ENCODE measurements at regions of chr12 and their contacts with region 1.

Region 1: GRCh38 chr12:97308576-97309198 is 153.9 kb upstream of the RMST start:
- DNase-seq: peak; percentile 77
- ATAC-seq: peak; percentile 69
- H3K4me3 ChIP-seq: no peak overlapping the region
- H3K4me3 Mint-ChIP-seq: no peak overlapping the region
- H3K27ac ChIP-seq: no peak overlapping the region
- H3K27ac Mint-ChIP-seq: no peak overlapping the region
- H3K4me1 ChIP-seq: peaks cover 16 to 18% of the 10 kb centered on the region in 2 donors
- H3K4me1 Mint-ChIP-seq: peaks cover 26% of the 10 kb centered on the region
- H3K27me3 ChIP-seq: peaks cover 0 to 5% (median under 1%) of the 10 kb centered on the region in 4 experiments
- H3K27me3 Mint-ChIP-seq: peaks cover 21% of the 10 kb centered on the region
- CTCF ChIP-seq: peak; percentile 88

Region 2: GRCh38 chr12:96578526-96579125 is 730.1 kb before region 1 on chr12:
- CTCF ChIA-PET with region 1: interaction called, 15 read pairs
- POLR2A ChIA-PET with region 1: interaction called, 5 read pairs
- intact Hi-C with region 1: loop called (anchors 1 kb)
- DNase-seq: peak; percentile 69
- ATAC-seq: peak; percentile 60
- H3K4me3 ChIP-seq: no peak overlapping the region
- H3K4me3 Mint-ChIP-seq: no peak overlapping the region
- H3K27ac ChIP-seq: no peak overlapping the region
- H3K27ac Mint-ChIP-seq: no peak overlapping the region
- H3K4me1 ChIP-seq: no peaks in the 10 kb centered on the region
- H3K4me1 Mint-ChIP-seq: peaks cover 2% of the 10 kb centered on the region
- H3K27me3 ChIP-seq: no peaks in the 10 kb centered on the region
- H3K27me3 Mint-ChIP-seq: no peaks in the 10 kb centered on the region
- CTCF ChIP-seq: peak; percentile 81

Region 3: DNA sequence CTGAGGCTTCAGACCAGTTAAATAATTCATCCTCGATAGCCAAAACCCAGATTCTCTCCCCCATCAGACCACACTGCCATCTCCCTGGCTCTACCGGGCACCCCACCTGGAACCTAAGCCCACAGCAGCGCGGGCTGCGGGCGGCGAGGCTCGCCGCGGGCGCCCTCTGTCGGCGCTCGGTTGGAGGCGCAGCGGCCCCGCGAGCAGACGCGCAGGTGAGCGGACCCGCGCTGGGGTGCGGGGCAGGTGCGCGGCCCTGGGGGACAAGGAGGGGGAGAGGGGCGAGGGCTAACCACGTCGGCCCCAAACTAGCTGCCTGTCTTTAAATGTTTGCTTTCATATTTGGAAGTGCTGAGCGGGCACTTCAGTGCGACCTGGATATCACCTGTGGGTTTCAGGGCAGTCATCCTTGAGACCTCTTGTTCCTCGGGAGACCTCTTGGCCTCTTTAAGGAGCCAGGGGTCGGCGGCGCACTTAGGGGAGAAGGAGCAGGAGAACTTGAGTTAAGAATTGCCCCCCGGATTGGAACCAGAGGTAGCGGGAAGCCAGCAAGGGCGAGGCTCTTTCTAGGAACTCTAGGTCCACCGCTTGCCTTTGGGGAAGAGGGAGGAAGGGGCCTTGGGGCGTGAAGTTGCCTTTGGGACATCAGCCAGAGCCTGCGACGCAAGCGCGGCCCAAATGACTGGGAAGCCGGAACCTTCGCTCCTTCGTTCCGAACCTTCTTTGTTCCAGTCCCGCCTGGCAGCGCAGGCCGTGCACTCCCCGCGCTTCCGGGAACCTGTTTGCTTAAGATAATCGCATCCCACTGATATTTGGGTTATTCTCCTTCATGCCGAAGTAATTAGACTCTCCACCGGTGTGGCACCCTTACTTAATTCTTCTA is 323.0 kb before region 1 on chr12:
- CTCF ChIA-PET with region 1: interaction called, 6 read pairs
- POLR2A ChIA-PET with region 1: interaction called, 4 read pairs
- intact Hi-C with region 1: loop called (anchors 5 kb)
- DNase-seq: peak; percentile 67
- ATAC-seq: peak; percentile 83
- H3K4me3 ChIP-seq: peak overlapping the region in 4 of 5 experiments; percentile 14 to 59 (median 42)
- H3K4me3 Mint-ChIP-seq: peak overlapping the region; percentile 66
- H3K27ac ChIP-seq: no peak overlapping the region
- H3K27ac Mint-ChIP-seq: no peak overlapping the region
- H3K4me1 ChIP-seq: peaks cover 10 to 12% of the 10 kb centered on the region in 2 donors
- H3K4me1 Mint-ChIP-seq: peaks cover 6% of the 10 kb centered on the region
- H3K27me3 ChIP-seq: peaks cover 0 to 20% (median 18%) of the 10 kb centered on the region in 4 experiments
- H3K27me3 Mint-ChIP-seq: peaks cover 40% of the 10 kb centered on the region
- CTCF ChIP-seq: peak; percentile 92

Region 4: DNA sequence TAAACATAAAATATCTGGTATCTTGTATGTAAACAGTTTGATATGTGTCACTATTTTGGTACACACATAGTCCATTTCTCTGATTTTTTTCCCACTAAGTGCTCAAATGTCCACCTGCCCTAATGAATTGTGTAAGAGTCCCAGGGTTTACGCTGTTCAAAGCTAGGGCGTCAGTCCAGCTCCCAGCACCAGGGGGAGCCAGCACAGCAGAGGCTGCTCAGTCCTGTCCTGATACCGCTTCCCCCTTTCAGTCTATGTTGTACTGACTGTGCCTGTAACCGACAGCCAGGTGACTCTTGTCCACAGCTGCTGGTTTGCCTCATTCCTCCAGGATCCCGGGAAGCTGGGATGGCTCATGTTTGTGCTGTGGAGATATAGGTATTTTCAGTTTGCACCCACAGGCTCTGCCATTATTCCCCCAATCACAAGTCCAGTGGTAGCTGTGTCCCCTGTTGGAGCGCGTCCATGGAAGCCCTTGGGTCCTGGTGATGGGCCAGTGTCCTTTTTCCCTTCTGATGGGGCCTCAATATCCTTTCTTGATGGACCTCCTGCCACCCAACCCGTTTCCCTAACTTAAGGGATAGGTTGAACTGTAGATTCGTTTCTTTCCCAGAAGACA is 159.6 kb before region 1 on chr12:
- CTCF ChIA-PET with region 1: interaction called, 126 read pairs
- POLR2A ChIA-PET with region 1: no interaction called
- intact Hi-C with region 1: loop called (anchors 1 kb)
- DNase-seq: peak; percentile 73
- ATAC-seq: peak; percentile 87
- H3K4me3 ChIP-seq: no peak overlapping the region
- H3K4me3 Mint-ChIP-seq: no peak overlapping the region
- H3K27ac ChIP-seq: no peak overlapping the region
- H3K27ac Mint-ChIP-seq: no peak overlapping the region
- H3K4me1 ChIP-seq: no peaks in the 10 kb centered on the region
- H3K4me1 Mint-ChIP-seq: no peaks in the 10 kb centered on the region
- H3K27me3 ChIP-seq: peaks cover 0 to 5% (median 2%) of the 10 kb centered on the region in 4 experiments
- H3K27me3 Mint-ChIP-seq: peaks cover 20% of the 10 kb centered on the region
- CTCF ChIP-seq: peak; percentile 84

Region 5: DNA sequence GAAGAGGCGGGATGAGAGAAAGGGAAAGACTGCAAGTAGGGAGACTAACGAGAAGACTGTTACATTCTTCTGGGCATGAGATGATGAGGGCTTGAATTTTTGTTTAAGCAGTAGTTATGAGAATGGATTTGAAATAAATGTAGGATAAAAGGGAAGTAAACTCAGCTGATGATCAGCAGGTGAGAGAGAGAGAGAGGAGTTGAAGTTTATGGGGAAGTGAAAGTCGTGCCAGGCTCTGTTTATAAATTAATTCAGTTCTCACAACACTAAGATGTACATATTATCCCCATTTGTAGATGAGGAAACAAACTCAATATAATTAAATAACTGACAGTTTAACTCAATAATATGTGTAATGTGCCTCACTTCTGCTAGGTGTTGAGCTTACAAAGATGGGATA is 16.1 kb before region 1 on chr12:
- CTCF ChIA-PET with region 1: interaction called, 5 read pairs
- POLR2A ChIA-PET with region 1: no interaction called
- intact Hi-C with region 1: loop called (anchors 1 kb)
- DNase-seq: peak; percentile 77
- ATAC-seq: peak; percentile 78
- H3K4me3 ChIP-seq: no peak overlapping the region
- H3K4me3 Mint-ChIP-seq: peak overlapping the region; percentile 8
- H3K27ac ChIP-seq: peak overlapping the region; percentile 29 to 46
- H3K27ac Mint-ChIP-seq: peak overlapping the region; percentile 69
- H3K4me1 ChIP-seq: peaks cover 22 to 26% of the 10 kb centered on the region in 2 donors
- H3K4me1 Mint-ChIP-seq: peaks cover 28% of the 10 kb centered on the region
- H3K27me3 ChIP-seq: no peaks in the 10 kb centered on the region
- H3K27me3 Mint-ChIP-seq: peaks cover 2% of the 10 kb centered on the region
- CTCF ChIP-seq: no peak

Region 6: GRCh38 chr12:97321621-97322020 is 12.9 kb after region 1 on chr12:
- CTCF ChIA-PET with region 1: interaction called, 10 read pairs
- POLR2A ChIA-PET with region 1: no interaction called
- intact Hi-C with region 1: no loop called
- DNase-seq: no peak
- ATAC-seq: no peak
- H3K4me3 ChIP-seq: no peak overlapping the region
- H3K4me3 Mint-ChIP-seq: no peak overlapping the region
- H3K27ac ChIP-seq: no peak overlapping the region
- H3K27ac Mint-ChIP-seq: no peak overlapping the region
- H3K4me1 ChIP-seq: no peaks in the 10 kb centered on the region
- H3K4me1 Mint-ChIP-seq: no peaks in the 10 kb centered on the region
- H3K27me3 ChIP-seq: no peaks in the 10 kb centered on the region
- H3K27me3 Mint-ChIP-seq: peaks cover 38% of the 10 kb centered on the region
- CTCF ChIP-seq: no peak

Region 7: DNA sequence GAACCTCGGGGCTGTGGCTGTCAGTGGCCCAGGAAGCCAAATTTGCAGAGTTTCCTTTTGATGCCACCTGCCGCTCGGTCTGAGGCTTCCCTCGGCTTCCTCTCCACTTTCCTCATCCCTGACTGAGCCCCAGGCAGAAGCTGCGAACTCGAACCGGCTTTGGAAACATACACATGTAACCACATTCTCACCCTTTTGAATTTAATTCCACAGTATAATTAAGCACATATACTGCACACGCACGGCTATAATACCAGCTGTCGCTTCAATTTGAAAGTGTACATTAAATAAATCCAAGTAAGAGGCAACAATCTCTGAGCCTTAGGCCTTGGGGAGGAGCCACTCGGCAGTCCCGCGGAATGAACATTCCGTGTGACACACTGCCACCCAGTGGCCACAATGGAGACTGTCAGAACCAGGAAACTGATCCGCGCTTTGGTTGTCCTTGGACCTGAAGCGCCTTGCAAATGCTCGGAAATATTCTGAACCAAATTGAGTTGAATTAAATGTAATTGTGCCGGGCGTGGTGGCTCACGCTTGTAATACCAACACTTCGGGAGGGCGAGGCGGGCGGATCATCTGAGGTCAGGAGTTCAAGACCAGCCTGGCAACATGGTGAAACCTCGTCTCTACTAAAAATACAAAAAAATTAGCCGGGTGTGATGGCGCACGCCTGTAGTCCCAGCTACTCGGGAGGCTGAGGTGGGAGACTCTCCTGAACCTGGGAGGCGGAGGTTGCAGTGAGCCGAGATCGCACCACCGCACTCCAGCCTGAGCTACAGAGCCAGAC is 1088.8 kb after region 1 on chr12:
- CTCF ChIA-PET with region 1: no interaction called
- POLR2A ChIA-PET with region 1: no interaction called
- intact Hi-C with region 1: loop called (anchors 10 kb)
- DNase-seq: peak; percentile 81
- ATAC-seq: peak; percentile 92
- H3K4me3 ChIP-seq: peak overlapping the region; percentile 35 to 65 (median 49)
- H3K4me3 Mint-ChIP-seq: peak overlapping the region; percentile 84
- H3K27ac ChIP-seq: peak overlapping the region in 1 of 2 donors; percentile 32
- H3K27ac Mint-ChIP-seq: no peak overlapping the region
- H3K4me1 ChIP-seq: peaks cover 13 to 18% of the 10 kb centered on the region in 2 donors
- H3K4me1 Mint-ChIP-seq: peaks cover 27% of the 10 kb centered on the region
- H3K27me3 ChIP-seq: no peaks in the 10 kb centered on the region
- H3K27me3 Mint-ChIP-seq: no peaks in the 10 kb centered on the region
- CTCF ChIP-seq: peak; percentile 94

Measured in B cell (primary cell).